Activated CD8-positive, alpha-beta T cell treated with anti-CD3 and anti-CD28 coated beads for 36 hours (primary cell): ENCODE measurements at regions of chr12 and their contacts with region 1.

Region 1: GRCh38 chr12:49776413-49776812 is 35.1 kb downstream of the TMBIM6 start:
- DNase-seq: peak; percentile 82
- ATAC-seq: peak; percentile 97
- H3K4me3 Mint-ChIP-seq: no peak overlapping the region
- H3K27ac Mint-ChIP-seq: peak overlapping the region; percentile 33
- H3K4me1 Mint-ChIP-seq: peaks cover 13% of the 10 kb centered on the region
- H3K27me3 Mint-ChIP-seq: peaks cover 8% of the 10 kb centered on the region
- CTCF ChIP-seq: peak; percentile 79

Region 2: DNA sequence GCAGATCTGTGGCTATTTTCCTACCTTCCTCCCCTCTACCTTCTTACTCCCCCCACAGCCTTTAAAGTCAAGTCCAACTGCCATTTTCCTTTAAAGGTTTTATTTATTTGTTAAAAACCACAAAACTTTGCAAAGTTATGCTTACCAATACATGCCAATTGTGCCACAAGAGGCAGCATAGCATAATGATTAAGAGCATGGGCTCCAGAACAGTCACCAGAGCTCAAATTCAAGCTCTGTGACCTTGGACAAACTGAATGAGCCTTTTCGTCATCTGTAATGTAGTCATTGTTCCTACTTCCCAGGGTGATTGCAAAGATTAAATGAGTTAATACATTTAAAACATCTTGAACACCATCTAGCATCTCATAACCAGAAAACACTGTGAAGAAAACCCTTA is 56.2 kb before region 1 on chr12:
- CTCF ChIA-PET with region 1: interaction called, 12 read pairs
- POLR2A ChIA-PET with region 1: interaction called, 4 read pairs
- intact Hi-C with region 1: no loop called
- DNase-seq: no peak
- ATAC-seq: no peak
- H3K4me3 Mint-ChIP-seq: no peak overlapping the region
- H3K27ac Mint-ChIP-seq: no peak overlapping the region
- H3K4me1 Mint-ChIP-seq: no peaks in the 10 kb centered on the region
- H3K27me3 Mint-ChIP-seq: peaks cover 3% of the 10 kb centered on the region
- CTCF ChIP-seq: no peak

Region 3: DNA sequence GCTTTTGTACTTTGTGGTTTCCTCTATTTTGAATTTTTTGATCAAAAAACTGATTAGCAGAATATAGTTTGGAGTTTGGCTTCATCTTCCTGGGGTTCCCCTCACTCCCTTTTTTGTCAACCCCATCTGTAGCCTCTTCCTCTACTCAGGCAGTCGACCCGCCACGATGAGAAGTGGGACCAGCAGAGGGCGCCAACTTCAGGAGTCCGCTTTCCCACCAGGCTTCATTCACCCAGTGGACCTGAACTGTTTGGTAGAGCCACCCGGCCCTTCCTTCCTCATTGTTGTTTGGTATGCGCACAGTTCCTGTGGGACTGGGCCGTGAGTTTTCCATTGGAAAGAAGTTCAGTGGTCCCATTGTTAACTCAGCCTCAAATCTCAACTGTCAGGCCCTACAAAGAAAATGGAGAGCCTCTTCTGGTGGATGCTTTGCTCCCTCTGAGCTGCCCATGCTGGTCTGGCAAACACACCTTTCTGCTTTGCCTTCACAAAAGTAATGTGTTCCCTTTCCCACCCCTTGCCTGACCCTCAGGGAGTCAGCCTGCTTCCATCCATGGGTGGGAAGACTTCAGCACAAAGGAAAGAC is 13.3 kb before region 1 on chr12:
- CTCF ChIA-PET with region 1: interaction called, 90 read pairs
- POLR2A ChIA-PET with region 1: interaction called, 3 read pairs
- intact Hi-C with region 1: no loop called
- DNase-seq: peak; percentile 89
- ATAC-seq: peak; percentile 56
- H3K4me3 Mint-ChIP-seq: peak overlapping the region; percentile 18
- H3K27ac Mint-ChIP-seq: peak overlapping the region; percentile 86
- H3K4me1 Mint-ChIP-seq: peaks cover 68% of the 10 kb centered on the region
- H3K27me3 Mint-ChIP-seq: no peaks in the 10 kb centered on the region
- CTCF ChIP-seq: peak; percentile 85

Region 4: DNA sequence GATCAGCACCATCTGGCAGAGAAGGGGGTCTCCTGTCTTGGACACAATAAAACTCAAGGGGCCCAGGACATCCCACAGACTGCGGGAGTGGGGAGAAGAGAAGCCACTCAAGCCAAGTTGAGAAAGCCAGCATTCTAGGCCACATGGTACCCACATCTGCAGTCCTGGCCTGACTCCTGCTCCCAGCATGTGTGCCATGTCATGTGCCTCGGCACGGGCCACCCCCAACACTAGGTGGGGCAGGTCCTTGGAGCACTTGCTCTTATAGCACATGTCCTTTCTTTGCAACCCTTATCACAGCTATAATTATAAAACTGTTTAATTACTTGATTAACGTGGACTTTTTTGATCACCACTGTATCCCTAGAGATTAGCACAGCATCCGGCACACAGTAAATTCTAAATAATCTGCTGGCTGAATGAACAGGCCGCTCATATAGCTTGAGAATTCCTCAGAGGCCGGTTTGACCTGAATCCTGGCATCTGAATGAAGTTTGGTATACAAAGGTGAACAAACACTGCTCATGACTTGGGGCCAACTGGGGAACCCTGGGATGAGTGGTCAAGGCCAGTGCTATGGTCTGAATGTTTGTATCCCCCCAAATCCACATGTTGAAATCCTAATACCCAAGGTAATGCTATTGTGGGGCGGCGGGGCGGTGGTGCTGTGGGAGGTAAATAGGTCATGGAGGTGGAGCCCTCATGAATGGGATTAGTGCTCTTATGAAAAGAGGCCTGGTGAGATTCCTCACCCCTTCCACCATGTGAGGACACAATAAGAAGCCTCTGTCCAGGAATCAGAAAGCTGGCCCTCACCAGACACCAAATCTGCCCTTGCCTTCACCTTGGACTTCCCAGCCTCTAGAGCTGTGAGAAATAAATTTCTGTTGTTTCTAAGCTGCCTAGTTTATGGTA is 45.2 kb after region 1 on chr12:
- CTCF ChIA-PET with region 1: interaction called, 18 read pairs
- POLR2A ChIA-PET with region 1: interaction called, 3 read pairs
- intact Hi-C with region 1: no loop called
- DNase-seq: no peak
- ATAC-seq: peak; percentile 37
- H3K4me3 Mint-ChIP-seq: no peak overlapping the region
- H3K27ac Mint-ChIP-seq: peak overlapping the region; percentile 86
- H3K4me1 Mint-ChIP-seq: peaks cover 33% of the 10 kb centered on the region
- H3K27me3 Mint-ChIP-seq: no peaks in the 10 kb centered on the region
- CTCF ChIP-seq: no peak

Region 5: GRCh38 chr12:49866859-49867579 is 90.6 kb after region 1 on chr12:
- CTCF ChIA-PET with region 1: interaction called, 17 read pairs
- POLR2A ChIA-PET with region 1: no interaction called
- intact Hi-C with region 1: no loop called
- DNase-seq: peak; percentile 85
- ATAC-seq: peak; percentile 98
- H3K4me3 Mint-ChIP-seq: no peak overlapping the region
- H3K27ac Mint-ChIP-seq: no peak overlapping the region
- H3K4me1 Mint-ChIP-seq: no peaks in the 10 kb centered on the region
- H3K27me3 Mint-ChIP-seq: no peaks in the 10 kb centered on the region
- CTCF ChIP-seq: peak; percentile 92